ENCODE measurements at regions of chr6 and their contacts with region 1.

Region 1: DNA sequence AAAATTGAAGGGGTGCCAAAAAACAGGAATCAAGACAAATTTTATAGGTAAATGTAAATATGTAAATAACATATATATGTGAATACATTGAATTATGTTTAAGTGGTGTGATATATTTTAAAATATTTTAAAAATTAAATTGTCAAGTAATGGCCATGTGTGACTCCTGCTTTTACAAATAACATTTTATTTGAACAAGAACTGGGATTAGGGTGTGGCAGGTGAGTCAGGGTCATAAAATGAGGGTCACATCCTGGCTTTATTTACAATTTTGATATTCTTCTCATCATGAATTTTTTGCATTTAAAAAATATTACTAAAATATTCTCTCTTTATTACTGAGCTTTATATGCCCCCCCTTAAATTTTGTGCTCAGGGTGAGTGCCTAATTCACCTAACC is 601.1 kb upstream of the MAN1A1 start:
- DNase-seq: no peak
- H3K4me3 ChIP-seq: no peak overlapping the region
- H3K27ac ChIP-seq: no peak overlapping the region
- H3K27me3 ChIP-seq: no peaks in the 10 kb centered on the region
- CTCF ChIP-seq: no peak

Region 2: GRCh38 chr6:119620846-119621555 is 329.7 kb before region 1 on chr6:
- intact Hi-C with region 1: no loop called
- DNase-seq: no peak
- H3K4me3 ChIP-seq: no peak overlapping the region
- H3K27ac ChIP-seq: no peak overlapping the region
- H3K27me3 ChIP-seq: no peaks in the 10 kb centered on the region
- CTCF ChIP-seq: no peak

Region 3: GRCh38 chr6:119768201-119768600 is 182.5 kb before region 1 on chr6:
- intact Hi-C with region 1: no loop called
- DNase-seq: no peak
- H3K4me3 ChIP-seq: no peak overlapping the region
- H3K27ac ChIP-seq: no peak overlapping the region
- H3K27me3 ChIP-seq: peaks cover 0 to 6% (median 0%) of the 10 kb centered on the region in 45 donors
- CTCF ChIP-seq: no peak

Region 4: DNA sequence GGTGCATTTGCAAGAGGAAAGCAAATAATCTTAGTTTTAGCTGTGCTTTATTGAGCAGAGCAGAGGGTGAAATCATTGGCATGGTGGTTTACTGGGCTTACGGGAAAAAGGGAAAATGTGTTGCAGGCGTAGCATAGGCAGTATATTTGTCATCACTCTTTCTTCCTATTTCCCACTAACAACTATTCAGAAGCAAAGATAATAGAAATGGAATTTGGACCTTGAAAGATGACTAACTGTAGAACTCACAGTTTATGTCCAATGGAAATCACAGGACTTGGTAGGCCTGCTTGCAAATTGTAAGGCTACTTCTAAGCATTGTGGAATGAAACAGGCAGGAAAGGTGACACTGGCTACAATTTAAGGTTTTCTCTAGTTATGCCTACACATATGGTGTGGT is 10.8 kb after region 1 on chr6:
- intact Hi-C with region 1: loop called in 1 of 2 experiments (anchors 2 kb)
- DNase-seq: no peak
- H3K4me3 ChIP-seq: no peak overlapping the region
- H3K27ac ChIP-seq: no peak overlapping the region
- H3K27me3 ChIP-seq: no peaks in the 10 kb centered on the region
- CTCF ChIP-seq: no peak

Region 5: DNA sequence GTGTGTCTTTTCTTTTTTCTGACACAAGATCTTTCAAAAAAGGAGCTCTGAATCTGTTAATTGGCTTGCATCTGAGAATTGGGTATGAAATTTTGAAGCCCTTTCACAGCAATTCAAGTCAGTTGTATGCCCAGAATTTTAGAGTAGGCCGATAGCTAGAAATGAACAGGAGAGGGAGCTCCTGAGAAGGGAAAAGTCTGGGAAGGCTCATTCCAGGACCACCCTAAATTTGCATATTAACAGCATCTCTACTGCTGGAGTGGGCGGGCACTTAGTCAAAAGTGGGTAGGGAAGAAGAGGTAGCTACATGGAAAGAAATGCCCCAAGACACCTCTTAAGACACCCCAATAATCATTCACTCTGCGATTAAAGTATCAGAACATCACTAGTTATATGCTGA is 455.3 kb after region 1 on chr6:
- intact Hi-C with region 1: no loop called
- DNase-seq: no peak
- H3K4me3 ChIP-seq: no peak overlapping the region
- H3K27ac ChIP-seq: no peak overlapping the region
- H3K27me3 ChIP-seq: no peaks in the 10 kb centered on the region
- CTCF ChIP-seq: no peak

Measured in dorsolateral prefrontal cortex (tissue), 120 donors.